Activated T-helper 1 cell treated with anti-CD3 and anti-CD28 coated beads, Interleukin-12 subunit alpha, Interleukin-12 subunit beta, Interleukin-2, Interleukin-4 antibody, amounts not matched to agents 30 ng/mL and 10 ng/mL and 1 ng/mL, durations not matched to agents 14 hours and 24 hours and 36 hours (primary cell): ENCODE measurements at regions of chr3 and their contacts with region 1.

Region 1: DNA sequence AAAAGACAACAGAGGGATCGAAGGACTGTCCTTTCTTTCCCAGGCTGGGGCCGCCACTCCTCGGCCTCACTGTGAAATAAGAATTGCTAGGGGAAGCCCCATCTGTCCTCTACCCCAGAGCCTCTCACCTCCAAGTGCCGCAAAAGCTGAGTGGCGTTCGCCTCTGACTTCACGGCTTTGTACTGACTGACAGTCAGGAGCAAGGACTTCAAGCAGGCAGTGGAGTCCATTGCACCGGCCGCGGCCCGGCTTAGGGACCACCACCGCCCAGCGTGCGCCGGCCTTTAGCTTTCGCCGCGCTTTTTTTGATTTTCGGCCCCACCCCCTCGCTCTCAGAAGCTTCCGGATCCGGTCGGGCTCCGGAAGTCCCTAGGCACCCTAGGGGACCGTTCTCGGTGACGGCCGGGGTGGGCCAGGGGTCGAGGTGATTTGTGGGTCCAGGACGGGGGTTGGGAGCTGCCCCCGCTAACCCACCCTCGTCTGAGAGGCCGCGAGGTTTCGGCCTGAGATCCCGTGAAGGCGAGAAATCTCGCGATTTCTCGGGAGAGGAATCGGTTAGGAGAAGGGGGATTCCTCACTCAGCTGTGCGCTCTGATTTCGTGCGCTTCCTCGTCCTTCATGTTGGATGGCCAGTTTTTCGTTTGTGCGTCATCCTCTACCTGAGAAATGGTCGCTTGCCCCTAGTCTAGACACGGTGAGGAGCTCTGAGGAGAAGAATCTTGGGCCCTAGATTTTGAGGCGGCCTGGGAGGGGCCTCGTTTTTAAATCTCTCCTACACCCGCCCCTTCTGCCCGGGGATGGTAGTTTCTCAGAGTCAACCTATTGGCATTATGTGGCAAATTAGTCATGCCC is at the starts of genes CIP2A and DZIP3:
- DNase-seq: peak; percentile 80
- H3K4me3 Mint-ChIP-seq: peak within 1 kb of the TSS; percentile 94
- H3K27ac Mint-ChIP-seq: peak within 1 kb of the TSS; percentile 95
- H3K4me1 Mint-ChIP-seq: peaks cover 65% of the 10 kb centered on the region
- H3K27me3 Mint-ChIP-seq: no peaks in the 10 kb centered on the region
- total RNA-seq, gene CIP2A: 49.7 and 54.0 TPM in 2 replicates
- total RNA-seq, gene DZIP3: 5.0 and 5.2 TPM in 2 replicates

Region 2: DNA sequence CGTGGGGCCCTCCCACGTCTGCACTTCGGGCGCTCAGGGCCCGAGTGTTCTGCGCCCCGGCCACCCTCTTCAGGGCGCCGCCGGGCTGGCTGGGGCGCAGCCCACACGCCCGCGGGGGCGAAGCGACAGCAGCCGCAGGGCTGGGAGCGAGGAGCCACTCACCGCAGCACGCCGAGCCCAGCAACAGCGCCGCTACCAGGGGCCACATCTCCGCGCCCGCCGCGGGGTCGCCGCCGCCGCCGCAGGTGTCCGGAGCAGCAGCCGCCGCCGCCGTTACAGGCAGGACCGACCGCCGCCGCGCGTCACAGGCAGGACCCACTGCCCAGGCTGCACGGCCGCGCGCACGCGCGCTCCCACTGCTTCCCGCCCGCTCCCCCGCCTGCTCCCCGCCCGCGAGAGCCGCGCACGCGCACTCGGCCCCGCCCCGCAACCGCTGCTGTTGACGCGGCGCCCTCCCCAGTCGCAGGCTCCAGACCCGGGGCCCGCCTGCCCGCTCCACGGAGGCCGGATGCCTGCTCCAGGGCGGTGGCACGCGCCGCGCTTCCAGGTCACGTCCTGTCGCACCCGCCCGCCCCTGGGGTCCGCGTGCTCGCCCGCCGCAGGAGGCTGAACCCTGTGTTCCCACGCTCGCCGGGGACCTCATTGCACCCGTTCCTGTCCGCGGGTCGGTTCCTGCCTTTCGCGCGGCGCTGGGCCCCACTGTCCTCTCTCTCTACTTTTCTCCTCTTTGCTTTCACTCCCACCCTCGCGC is 498.5 kb before region 1 on chr3 and contains the start of gene CD47:
- intact Hi-C with region 1: loop called (anchors 2 kb)
- DNase-seq: peak; percentile 93
- H3K4me3 Mint-ChIP-seq: peak within 1 kb of the TSS; percentile 95
- H3K27ac Mint-ChIP-seq: peak within 1 kb of the TSS; percentile 99
- H3K4me1 Mint-ChIP-seq: peaks cover 23% of the 10 kb centered on the region
- H3K27me3 Mint-ChIP-seq: peaks cover 7% of the 10 kb centered on the region
- total RNA-seq, gene CD47: 98.3 and 105 TPM in 2 replicates

Region 3: GRCh38 chr3:108292905-108293328 is 296.5 kb before region 1 on chr3:
- intact Hi-C with region 1: loop called (anchors 10 kb)
- DNase-seq: no peak
- H3K4me3 Mint-ChIP-seq: peak overlapping the region; percentile 53
- H3K27ac Mint-ChIP-seq: peak overlapping the region; percentile 83
- H3K4me1 Mint-ChIP-seq: peaks cover 64% of the 10 kb centered on the region
- H3K27me3 Mint-ChIP-seq: peaks cover 2% of the 10 kb centered on the region

Region 4: GRCh38 chr3:108437440-108437839 is 151.9 kb before region 1 on chr3:
- intact Hi-C with region 1: no loop called
- DNase-seq: no peak
- H3K4me3 Mint-ChIP-seq: no peak overlapping the region
- H3K27ac Mint-ChIP-seq: no peak overlapping the region
- H3K4me1 Mint-ChIP-seq: no peaks in the 10 kb centered on the region
- H3K27me3 Mint-ChIP-seq: peaks cover 2% of the 10 kb centered on the region

Region 5: DNA sequence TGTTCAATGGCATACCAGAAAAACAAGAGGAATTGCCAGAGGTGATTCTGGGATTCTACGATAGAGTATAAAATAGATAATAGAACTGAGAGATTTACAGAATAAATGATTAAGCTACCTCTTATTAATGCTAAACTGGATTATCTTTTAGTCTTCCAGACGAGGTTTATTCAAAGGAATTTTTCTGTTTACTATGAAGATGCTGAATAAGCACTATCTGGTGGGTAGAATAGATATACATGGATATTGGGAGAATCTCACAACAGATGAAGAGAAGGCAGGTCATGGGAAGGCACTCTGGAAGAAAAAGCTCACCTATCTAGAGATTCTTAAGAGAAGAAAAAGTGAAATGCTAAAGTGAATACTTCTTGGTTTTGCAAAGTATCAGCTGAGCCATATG is 11.3 kb before region 1 on chr3:
- intact Hi-C with region 1: loop called (anchors 1 kb)
- DNase-seq: no peak
- H3K4me3 Mint-ChIP-seq: no peak overlapping the region
- H3K27ac Mint-ChIP-seq: no peak overlapping the region
- H3K4me1 Mint-ChIP-seq: peaks cover 13% of the 10 kb centered on the region
- H3K27me3 Mint-ChIP-seq: no peaks in the 10 kb centered on the region

Region 6: DNA sequence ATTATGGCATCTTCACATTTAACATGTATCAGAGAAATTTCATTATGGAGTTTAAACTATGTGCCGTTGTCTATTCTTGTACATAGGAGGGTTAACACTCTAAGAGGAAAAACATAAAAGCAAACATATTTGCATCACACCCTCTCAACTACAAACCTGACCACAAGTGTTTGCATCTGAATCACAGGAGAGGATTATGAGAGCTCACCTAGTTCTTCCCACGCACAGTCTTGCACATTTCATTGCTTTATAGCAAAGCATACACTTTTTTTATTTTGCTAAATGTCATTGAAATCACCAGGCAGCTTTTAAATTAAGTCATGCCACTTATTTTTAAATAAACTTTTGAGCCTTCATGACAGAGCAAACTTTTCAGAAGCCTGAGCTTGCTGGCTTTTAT is 245.7 kb after region 1 on chr3:
- intact Hi-C with region 1: loop called (anchors 2 kb)
- DNase-seq: peak; percentile 47
- H3K4me3 Mint-ChIP-seq: peak overlapping the region; percentile 86
- H3K27ac Mint-ChIP-seq: peak overlapping the region; percentile 99
- H3K4me1 Mint-ChIP-seq: peaks cover 92% of the 10 kb centered on the region
- H3K27me3 Mint-ChIP-seq: no peaks in the 10 kb centered on the region

Region 7: DNA sequence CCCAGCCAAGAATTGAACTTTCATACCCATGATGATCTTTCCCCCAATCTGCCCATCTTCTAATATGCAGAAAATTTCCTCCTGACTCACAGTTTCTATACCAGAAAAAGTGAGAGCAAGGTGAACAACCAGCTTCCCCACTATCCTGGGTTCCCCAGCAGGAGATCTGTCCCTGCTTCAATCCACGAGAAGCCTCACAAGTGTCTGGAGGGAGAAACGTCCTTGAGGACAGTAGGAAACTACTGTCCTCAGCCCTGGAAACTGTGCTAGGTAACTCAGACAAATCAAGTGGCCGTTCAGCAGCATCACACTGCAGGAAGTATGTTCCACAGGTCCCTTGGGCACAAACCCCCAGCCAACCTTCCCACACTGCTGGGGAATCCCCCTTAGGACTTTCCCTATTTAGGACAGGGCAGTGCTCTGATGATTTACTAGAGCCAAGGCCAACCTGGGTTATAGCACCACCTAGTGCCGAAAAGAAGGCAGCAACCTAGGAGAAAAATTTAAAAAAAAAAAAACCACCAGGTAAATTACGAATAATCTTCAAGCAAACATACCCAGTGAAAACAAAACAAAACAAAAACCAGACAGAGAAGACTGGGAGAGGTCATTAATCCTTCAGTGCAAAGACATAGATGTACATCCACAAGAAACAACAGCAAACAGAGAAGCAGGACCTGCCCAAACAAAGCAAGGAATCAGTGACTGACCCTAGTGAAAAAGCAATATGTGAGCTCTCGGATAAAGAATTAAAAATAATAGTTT is 492.6 kb after region 1 on chr3:
- intact Hi-C with region 1: no loop called
- DNase-seq: no peak
- H3K4me3 Mint-ChIP-seq: no peak overlapping the region
- H3K27ac Mint-ChIP-seq: no peak overlapping the region
- H3K4me1 Mint-ChIP-seq: peaks cover 5% of the 10 kb centered on the region
- H3K27me3 Mint-ChIP-seq: peaks cover 30% of the 10 kb centered on the region

Region 8: GRCh38 chr3:109806929-109807328 is 1217.6 kb after region 1 on chr3:
- intact Hi-C with region 1: loop called (anchors 10 kb)
- DNase-seq: peak; percentile 30
- H3K4me3 Mint-ChIP-seq: peak overlapping the region; percentile 35
- H3K27ac Mint-ChIP-seq: peak overlapping the region; percentile 67
- H3K4me1 Mint-ChIP-seq: peaks cover 39% of the 10 kb centered on the region
- H3K27me3 Mint-ChIP-seq: peaks cover 8% of the 10 kb centered on the region